ENCODE measurements at regions of chr18 and their contacts with region 1.

Region 1: DNA sequence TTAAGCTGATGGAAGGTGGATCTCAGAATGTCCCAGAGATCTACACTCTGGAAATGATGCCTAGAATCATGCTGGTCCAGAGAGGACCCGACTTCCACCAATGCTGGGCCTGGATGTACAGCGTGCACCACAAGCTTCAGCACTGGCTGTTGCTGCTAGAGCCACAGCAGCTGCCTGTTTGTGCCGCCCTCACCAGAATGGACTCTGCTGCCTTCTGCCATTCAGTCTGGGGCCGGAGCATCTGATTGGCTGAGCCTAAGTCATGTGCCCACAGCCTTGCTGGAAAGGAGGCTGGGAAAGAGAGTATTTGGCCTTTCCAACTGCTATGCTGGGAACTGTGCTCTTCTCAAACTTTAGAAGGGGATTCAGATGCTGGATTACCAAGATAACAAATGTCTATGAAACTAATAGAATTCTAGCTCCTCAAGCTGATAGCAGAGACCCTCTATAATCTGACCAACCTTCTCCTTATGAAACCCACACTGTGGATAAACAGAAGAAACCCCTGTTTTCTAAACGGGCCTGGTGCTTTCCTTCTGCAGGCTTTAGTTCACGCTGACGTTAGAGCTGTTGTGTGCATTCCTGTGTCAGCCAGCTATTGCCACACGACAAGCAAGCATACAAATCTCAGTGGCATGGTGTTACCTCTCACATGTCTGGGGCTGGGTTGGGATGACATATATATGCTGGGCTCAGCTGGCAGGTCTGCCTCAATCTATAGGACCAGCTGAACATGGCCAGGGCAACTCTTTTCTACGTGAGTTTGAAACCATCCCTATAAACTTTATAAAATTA is 4.1 kb upstream of the LOXHD1 start:
- DNase-seq: peak in 1 of 3 donors; percentile 25
- ATAC-seq: peak in 1 of 2 donors; percentile 34
- H3K4me3 ChIP-seq: no peak overlapping the region
- H3K27ac ChIP-seq: no peak overlapping the region
- H3K4me1 ChIP-seq: no peaks in the 10 kb centered on the region
- H3K27me3 ChIP-seq: no peaks in the 10 kb centered on the region

Region 2: DNA sequence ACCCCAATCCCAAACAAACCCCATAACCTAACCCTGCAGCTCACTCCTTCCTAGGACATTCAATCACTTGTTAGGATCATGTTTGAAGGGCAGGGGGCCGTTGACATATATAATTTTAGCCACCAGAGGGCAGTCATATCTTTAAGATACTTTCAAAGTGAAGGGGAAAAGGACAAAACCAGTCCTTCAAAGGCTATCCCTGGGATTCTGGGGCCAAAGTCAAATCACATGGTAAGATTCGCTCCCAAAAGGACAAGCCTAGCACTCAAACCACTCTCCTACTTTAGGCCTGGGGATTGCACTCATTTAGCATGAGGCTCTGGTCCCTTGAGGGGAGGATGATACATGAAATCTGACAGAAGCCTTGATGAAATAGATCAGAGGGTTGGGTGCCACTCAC is 512.3 kb before region 1 on chr18:
- intact Hi-C with region 1: loop called (anchors 5 to 10 kb)
- DNase-seq: no peak
- ATAC-seq: peak; percentile 32 to 48
- H3K4me3 ChIP-seq: no peak overlapping the region
- H3K27ac ChIP-seq: no peak overlapping the region
- H3K4me1 ChIP-seq: peaks cover 2% of the 10 kb centered on the region
- H3K27me3 ChIP-seq: no peaks in the 10 kb centered on the region

Region 3: DNA sequence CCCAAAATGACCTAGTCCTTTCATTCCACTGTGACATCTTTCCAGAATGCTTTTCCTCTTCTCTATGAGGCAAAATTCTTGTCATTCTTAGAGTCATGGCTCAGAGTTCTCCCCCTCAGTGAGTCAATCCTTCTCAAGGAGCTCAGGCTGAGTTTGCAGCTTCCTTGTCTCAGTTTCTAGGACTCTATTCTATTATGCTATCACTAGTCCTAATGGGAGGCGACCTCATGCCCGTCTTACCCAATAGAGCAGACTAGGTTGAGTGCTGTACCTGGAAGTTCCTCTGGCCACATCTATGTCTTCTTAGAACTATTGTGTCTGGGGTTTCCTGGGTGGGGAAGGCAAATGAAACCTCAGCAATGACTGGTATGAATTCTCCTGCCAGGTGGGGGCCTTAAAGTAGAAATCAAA is 505.5 kb before region 1 on chr18:
- intact Hi-C with region 1: loop called in 2 of 4 experiments (anchors 5 to 10 kb)
- DNase-seq: no peak
- ATAC-seq: no peak
- H3K4me3 ChIP-seq: no peak overlapping the region
- H3K27ac ChIP-seq: no peak overlapping the region
- H3K4me1 ChIP-seq: peaks cover 2% of the 10 kb centered on the region
- H3K27me3 ChIP-seq: no peaks in the 10 kb centered on the region

Region 4: GRCh38 chr18:46173393-46174341 is 487.5 kb before region 1 on chr18:
- intact Hi-C with region 1: loop called in 2 of 4 experiments (anchors 5 kb)
- DNase-seq: peak; percentile 94 to 98 (median 98)
- ATAC-seq: peak; percentile 98
- H3K4me3 ChIP-seq: peak overlapping the region; percentile 94
- H3K27ac ChIP-seq: peak overlapping the region; percentile 91
- H3K4me1 ChIP-seq: peaks cover 3% of the 10 kb centered on the region
- H3K27me3 ChIP-seq: no peaks in the 10 kb centered on the region

Region 5: DNA sequence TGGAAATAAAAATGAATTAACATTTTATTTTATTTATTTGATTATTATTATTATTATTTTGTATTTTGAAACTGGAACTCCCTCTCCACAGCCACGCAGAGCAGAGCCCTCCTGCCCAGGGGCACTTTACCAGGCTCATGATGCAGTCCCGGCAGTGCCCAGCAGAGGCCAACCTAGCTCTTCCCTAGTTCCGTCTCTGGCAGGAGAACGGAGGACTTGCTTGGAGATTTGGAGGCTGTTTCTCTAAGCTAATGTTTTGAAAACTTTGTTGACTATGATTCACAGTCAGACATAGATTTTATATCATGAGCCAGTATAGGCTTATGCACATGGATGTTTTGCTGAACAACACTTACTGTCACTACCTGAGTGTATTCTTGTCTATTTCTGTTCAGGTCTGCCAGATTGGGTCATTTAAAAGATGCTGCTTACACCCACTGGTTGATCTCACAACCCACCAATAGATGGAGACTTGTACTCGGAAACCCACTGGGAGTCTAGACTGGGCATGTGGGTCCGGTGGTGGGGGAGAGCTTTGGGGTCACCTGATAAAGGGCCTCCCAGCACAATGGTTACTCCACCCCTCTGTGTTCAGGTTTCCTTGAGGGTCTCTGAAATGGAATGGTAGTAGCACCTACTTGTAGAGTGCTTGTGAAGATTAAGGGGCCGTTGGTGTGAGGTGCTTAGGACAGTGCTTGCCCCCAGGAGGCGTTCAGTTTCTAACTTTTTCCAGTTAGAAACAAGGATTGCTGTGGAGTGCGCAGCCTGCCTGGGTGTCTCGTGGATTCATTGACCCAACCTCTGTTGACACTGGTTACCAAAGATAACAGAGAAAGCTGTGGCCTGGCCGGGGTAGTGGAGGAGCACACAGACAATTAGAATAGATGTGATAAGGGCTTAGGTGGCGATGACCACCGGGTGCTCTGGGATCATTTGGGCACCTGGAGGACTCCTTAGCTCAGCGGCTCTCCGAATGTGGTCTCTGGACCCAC is 379.7 kb before region 1 on chr18:
- intact Hi-C with region 1: loop called in 3 of 4 experiments (anchors 5 to 10 kb)
- DNase-seq: peak; percentile 66 to 87 (median 85)
- ATAC-seq: peak; percentile 82 to 87
- H3K4me3 ChIP-seq: no peak overlapping the region
- H3K27ac ChIP-seq: no peak overlapping the region
- H3K4me1 ChIP-seq: peaks cover 8% of the 10 kb centered on the region
- H3K27me3 ChIP-seq: no peaks in the 10 kb centered on the region

Region 6: GRCh38 chr18:46555724-46556123 is 105.4 kb before region 1 on chr18:
- intact Hi-C with region 1: loop called in 3 of 4 experiments (anchors 2 to 10 kb)
- DNase-seq: peak in 1 of 3 donors; percentile 65
- ATAC-seq: peak; percentile 61 to 76
- H3K4me3 ChIP-seq: no peak overlapping the region
- H3K27ac ChIP-seq: no peak overlapping the region
- H3K4me1 ChIP-seq: no peaks in the 10 kb centered on the region
- H3K27me3 ChIP-seq: no peaks in the 10 kb centered on the region

Region 7: GRCh38 chr18:46700066-46700824 is 39.1 kb after region 1 on chr18:
- intact Hi-C with region 1: no loop called
- DNase-seq: no peak
- ATAC-seq: no peak
- H3K4me3 ChIP-seq: no peak overlapping the region
- H3K27ac ChIP-seq: no peak overlapping the region
- H3K4me1 ChIP-seq: peaks cover 4% of the 10 kb centered on the region
- H3K27me3 ChIP-seq: no peaks in the 10 kb centered on the region

Measured in right cardiac atrium (tissue), 5 donors.